Stomach (tissue), 19 donors: ENCODE measurements at regions of chr14 and their contacts with region 1.

Region 1: GRCh38 chr14:23327947-23328744 is 6.9 kb downstream of the PABPN1 start:
- DNase-seq: peak; percentile 79 to 91
- H3K4me3 ChIP-seq: no peak overlapping the region
- H3K27ac ChIP-seq: peak overlapping the region in 2 of 5 donors; percentile 16 to 54
- H3K4me1 ChIP-seq: peaks cover 2 to 27% (median 15%) of the 10 kb centered on the region in 4 donors
- H3K27me3 ChIP-seq: no peaks in the 10 kb centered on the region
- CTCF ChIP-seq: peak in 5 of 7 experiments; percentile 77 to 91 (median 82)
- EP300 ChIP-seq: no peak
- POLR2A ChIP-seq: no peak

Region 2: GRCh38 chr14:23147676-23148075 is 180.5 kb before region 1 on chr14:
- intact Hi-C with region 1: no loop called
- DNase-seq: peak; percentile 54 to 59
- H3K4me3 ChIP-seq: no peak overlapping the region
- H3K27ac ChIP-seq: peak overlapping the region in 3 of 5 donors; percentile 32 to 93 (median 46)
- H3K4me1 ChIP-seq: peaks cover 13 to 75% (median 47%) of the 10 kb centered on the region in 4 donors
- H3K27me3 ChIP-seq: no peaks in the 10 kb centered on the region
- CTCF ChIP-seq: no peak
- EP300 ChIP-seq: no peak
- POLR2A ChIP-seq: no peak

Region 3: DNA sequence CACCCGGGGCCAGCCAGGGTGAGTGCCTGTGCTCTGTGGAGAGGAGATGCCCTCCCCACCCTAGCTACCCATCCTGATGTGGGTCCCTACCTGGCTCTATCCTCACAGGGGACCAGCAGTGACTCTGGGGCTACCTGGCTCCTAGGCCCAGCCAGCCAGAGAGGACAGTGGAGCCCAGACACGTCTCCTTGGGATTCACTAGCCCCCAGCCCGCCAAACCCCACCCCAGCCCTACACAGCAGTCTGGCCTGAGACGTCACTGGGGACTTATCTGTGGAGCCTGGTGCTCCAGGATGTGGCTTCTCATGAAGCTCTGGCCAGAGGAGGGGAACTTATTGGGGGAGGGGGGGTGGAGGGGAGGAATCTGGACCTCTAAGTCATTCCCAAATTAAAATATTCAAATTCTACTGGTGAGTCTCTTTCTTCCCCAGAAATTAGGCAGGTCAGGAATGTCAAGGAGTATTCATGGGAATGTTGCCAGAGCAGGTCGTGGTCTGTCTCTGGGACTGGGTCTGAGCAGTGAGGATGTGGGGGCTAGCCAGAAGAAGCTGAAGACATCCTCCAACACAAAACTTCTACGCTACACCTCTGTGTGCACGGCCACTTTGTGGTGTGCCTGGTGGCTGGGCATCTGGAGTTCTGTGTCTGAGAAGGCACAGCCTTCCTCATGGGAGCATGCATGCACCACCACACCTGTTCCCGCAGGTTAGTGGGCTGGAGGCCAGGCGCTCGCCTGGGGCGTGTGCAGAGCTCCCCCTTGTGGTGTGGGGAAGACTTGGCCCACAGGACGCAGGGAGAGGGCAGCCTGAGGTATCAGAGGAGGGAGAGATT is 51.4 kb after region 1 on chr14:
- intact Hi-C with region 1: loop called (anchors 5 kb)
- DNase-seq: peak; percentile 88 to 89
- H3K4me3 ChIP-seq: no peak overlapping the region
- H3K27ac ChIP-seq: no peak overlapping the region
- H3K4me1 ChIP-seq: peaks cover 0 to 10% (median 0%) of the 10 kb centered on the region in 4 donors
- H3K27me3 ChIP-seq: peaks cover 0 to 28% (median 0%) of the 10 kb centered on the region in 3 donors
- CTCF ChIP-seq: peak in 5 of 7 experiments; percentile 85 to 97 (median 90)
- EP300 ChIP-seq: no peak
- POLR2A ChIP-seq: no peak